Stomach (tissue), 19 donors: ENCODE measurements at regions of chr6 and their contacts with region 1.

Region 1: DNA sequence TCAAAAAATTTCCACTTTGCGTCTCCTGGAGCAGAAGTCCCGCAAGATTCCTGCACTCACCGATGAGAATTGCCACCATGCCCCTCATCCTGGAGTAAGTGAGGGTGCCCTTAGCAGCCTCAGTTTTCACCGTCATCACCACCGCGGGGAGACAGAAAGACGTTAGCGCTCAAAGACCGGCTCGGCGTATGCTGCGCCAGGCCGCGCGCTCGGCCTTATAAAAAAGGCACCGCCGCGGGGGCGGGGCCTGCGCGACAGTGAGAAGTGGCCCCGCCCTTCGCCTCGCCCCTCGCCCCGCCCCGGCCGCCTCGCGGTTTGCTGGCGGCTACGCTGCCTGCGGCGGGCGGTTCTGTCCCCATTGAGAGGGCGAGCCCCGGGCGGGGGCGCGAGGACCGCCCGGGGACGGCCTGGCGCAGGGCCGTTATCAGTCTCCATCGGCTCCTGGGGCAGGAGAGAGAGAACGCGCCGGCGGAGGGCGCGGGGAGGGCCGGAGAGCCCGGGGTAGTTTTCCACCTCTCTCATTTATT is 122.3 kb upstream of the SLC2A12 start:
- DNase-seq: peak; percentile 97
- H3K4me3 ChIP-seq: peak overlapping the region; percentile 67 to 79 (median 74)
- H3K27ac ChIP-seq: peak overlapping the region; percentile 98 to 100 (median 99)
- H3K4me1 ChIP-seq: peaks cover 20 to 73% (median 39%) of the 10 kb centered on the region in 4 donors
- H3K27me3 ChIP-seq: no peaks in the 10 kb centered on the region
- CTCF ChIP-seq: peak in 1 of 7 experiments; percentile 9
- EP300 ChIP-seq: no peak
- POLR2A ChIP-seq: peak in 2 of 4 donors; percentile 43 to 86

Region 2: DNA sequence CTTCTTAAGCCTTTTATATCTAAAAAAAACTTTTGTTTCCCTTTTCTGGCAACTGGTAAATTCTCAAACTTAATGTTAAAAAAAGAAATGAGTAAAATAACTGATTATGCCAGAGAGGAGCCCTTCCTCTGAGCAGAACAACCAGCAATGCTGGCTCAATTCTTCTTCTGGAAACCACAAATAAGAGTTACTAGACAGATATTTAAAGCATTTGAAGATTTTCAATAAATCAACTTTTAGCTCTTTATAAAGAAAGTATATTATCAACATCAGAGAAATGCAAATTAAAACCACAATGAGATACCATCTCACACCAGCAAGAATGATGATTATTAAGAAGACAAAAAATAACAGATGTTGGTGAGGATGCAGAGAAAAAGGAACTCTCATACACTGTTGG is 347.0 kb before region 1 on chr6:
- intact Hi-C with region 1: no loop called
- DNase-seq: no peak
- H3K4me3 ChIP-seq: no peak overlapping the region
- H3K27ac ChIP-seq: no peak overlapping the region
- H3K4me1 ChIP-seq: no peaks in the 10 kb centered on the region
- H3K27me3 ChIP-seq: no peaks in the 10 kb centered on the region
- CTCF ChIP-seq: no peak
- EP300 ChIP-seq: no peak
- POLR2A ChIP-seq: no peak

Region 3: GRCh38 chr6:133992992-133993680 is 181.6 kb before region 1 on chr6:
- intact Hi-C with region 1: no loop called
- DNase-seq: no peak
- H3K4me3 ChIP-seq: no peak overlapping the region
- H3K27ac ChIP-seq: peak overlapping the region in 2 of 5 donors; percentile 20 to 22
- H3K4me1 ChIP-seq: peaks cover 0 to 50% (median 25%) of the 10 kb centered on the region in 4 donors
- H3K27me3 ChIP-seq: no peaks in the 10 kb centered on the region
- CTCF ChIP-seq: no peak
- EP300 ChIP-seq: no peak
- POLR2A ChIP-seq: no peak

Region 4: DNA sequence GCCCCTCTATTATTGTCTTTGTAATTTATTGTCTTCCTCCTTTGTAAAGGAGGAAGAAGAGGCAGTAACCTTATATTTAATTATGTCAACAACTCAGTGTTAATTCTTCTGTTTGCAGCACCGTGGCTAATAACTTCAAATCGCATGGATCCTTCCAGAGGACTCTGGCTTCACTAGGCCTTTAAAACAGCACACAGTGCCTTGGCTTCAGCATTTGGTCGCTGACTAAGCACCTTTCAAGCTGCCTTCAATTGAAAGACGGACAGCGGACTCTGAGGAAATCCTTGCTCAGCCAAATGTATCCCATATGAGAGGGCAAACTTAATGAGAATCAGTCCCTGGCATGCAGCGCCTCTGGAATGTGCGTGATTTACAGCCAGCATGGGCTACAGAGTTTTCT is 78.9 kb after region 1 on chr6:
- intact Hi-C with region 1: no loop called
- DNase-seq: peak in 1 of 2 donors; percentile 13
- H3K4me3 ChIP-seq: no peak overlapping the region
- H3K27ac ChIP-seq: no peak overlapping the region
- H3K4me1 ChIP-seq: peaks cover 0 to 21% (median 12%) of the 10 kb centered on the region in 4 donors
- H3K27me3 ChIP-seq: no peaks in the 10 kb centered on the region
- CTCF ChIP-seq: no peak
- EP300 ChIP-seq: no peak
- POLR2A ChIP-seq: no peak

Region 5: GRCh38 chr6:134640975-134641429 is 466.3 kb after region 1 on chr6:
- intact Hi-C with region 1: loop called (anchors 5 kb)
- DNase-seq: peak; percentile 77 to 88
- H3K4me3 ChIP-seq: no peak overlapping the region
- H3K27ac ChIP-seq: peak overlapping the region; percentile 7 to 54 (median 11)
- H3K4me1 ChIP-seq: peaks cover 14 to 41% (median 21%) of the 10 kb centered on the region in 4 donors
- H3K27me3 ChIP-seq: no peaks in the 10 kb centered on the region
- CTCF ChIP-seq: peak in 6 of 7 experiments; percentile 78 to 93 (median 90)
- EP300 ChIP-seq: no peak
- POLR2A ChIP-seq: no peak

Region 6: DNA sequence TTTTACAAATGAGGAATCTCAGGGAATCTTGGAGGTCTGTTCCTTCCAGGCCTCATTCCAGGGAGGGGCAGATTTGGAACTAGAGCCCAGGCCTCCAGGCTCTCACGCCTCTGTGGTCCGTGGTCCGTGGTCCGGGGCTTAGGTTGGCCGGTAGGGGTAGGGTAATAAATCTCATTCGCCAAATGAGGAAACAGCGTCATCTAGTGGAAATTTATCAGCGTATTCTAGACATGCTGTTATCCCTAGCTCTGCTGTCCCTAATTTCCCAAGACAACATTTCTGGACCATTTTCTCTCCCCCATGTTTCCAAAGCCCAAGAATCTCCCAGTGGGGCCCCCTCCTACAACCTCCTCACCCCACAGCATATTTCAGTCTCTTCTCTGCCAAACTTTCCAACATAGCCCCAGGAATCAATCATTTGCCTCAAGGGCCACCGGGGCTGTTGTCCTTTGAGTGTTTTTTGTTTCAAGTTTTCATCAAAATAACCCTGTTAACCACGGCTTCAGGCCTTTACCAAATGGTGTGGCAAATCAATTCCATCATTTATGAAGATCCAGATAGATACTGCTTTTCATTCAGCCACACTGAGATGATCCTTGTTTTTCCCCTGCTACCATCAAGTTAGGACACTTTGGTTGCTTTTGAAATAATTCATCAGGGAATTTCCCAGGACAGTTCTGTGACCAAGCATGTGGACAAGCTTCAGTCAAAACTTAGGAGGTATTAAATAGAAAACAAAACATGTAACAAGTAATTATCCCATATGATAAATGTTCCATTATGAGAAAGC is 648.4 kb after region 1 on chr6:
- intact Hi-C with region 1: loop called (anchors 5 kb)
- DNase-seq: peak; percentile 31 to 93
- H3K4me3 ChIP-seq: no peak overlapping the region
- H3K27ac ChIP-seq: no peak overlapping the region
- H3K4me1 ChIP-seq: peaks cover 0 to 10% (median 6%) of the 10 kb centered on the region in 4 donors
- H3K27me3 ChIP-seq: no peaks in the 10 kb centered on the region
- CTCF ChIP-seq: peak in 5 of 7 experiments; percentile 42 to 94 (median 80)
- EP300 ChIP-seq: no peak
- POLR2A ChIP-seq: no peak